ENCODE measurements at regions of chr4 and their contacts with region 1.

Region 1: GRCh38 chr4:101347557-101348366 is 436 bp upstream of the PPP3CA start:
- DNase-seq: peak; percentile 96 to 100 (median 98)
- ATAC-seq: peak; percentile 77 to 82
- H3K4me3 Mint-ChIP-seq: peak overlapping the region; percentile 94 to 99 (median 97)
- H3K27ac Mint-ChIP-seq: peak overlapping the region; percentile 87 to 97 (median 94)
- H3K4me1 Mint-ChIP-seq: peaks cover 12 to 38% (median 33%) of the 10 kb centered on the region in 4 donors
- H3K27me3 Mint-ChIP-seq: peaks cover 6 to 21% (median 8%) of the 10 kb centered on the region in 5 donors

Region 2: GRCh38 chr4:101025755-101026154 is 322.0 kb before region 1 on chr4:
- POLR2A ChIA-PET with region 1: no interaction called
- DNase-seq: no peak
- ATAC-seq: no peak
- H3K4me3 Mint-ChIP-seq: no peak overlapping the region
- H3K27ac Mint-ChIP-seq: peak overlapping the region in 2 of 10 donors; percentile 13 to 39
- H3K4me1 Mint-ChIP-seq: peaks cover 4 to 21% (median 9%) of the 10 kb centered on the region in 4 donors
- H3K27me3 Mint-ChIP-seq: no peaks in the 10 kb centered on the region

Region 3: GRCh38 chr4:101328063-101328602 is 19.6 kb before region 1 on chr4:
- POLR2A ChIA-PET with region 1: interaction called, 17 read pairs
- DNase-seq: peak in 5 of 10 donors; percentile 10 to 82 (median 74)
- ATAC-seq: peak; percentile 94
- H3K4me3 Mint-ChIP-seq: peak overlapping the region; percentile 59 to 87 (median 71)
- H3K27ac Mint-ChIP-seq: peak overlapping the region; percentile 4 to 88 (median 80)
- H3K4me1 Mint-ChIP-seq: peaks cover 6 to 76% (median 51%) of the 10 kb centered on the region in 4 donors
- H3K27me3 Mint-ChIP-seq: peaks cover 0 to 2% (median 0%) of the 10 kb centered on the region in 5 donors

Region 4: GRCh38 chr4:101393250-101393649 is 45.5 kb after region 1 on chr4:
- POLR2A ChIA-PET with region 1: no interaction called
- DNase-seq: no peak
- ATAC-seq: no peak
- H3K4me3 Mint-ChIP-seq: no peak overlapping the region
- H3K27ac Mint-ChIP-seq: no peak overlapping the region
- H3K4me1 Mint-ChIP-seq: no peaks in the 10 kb centered on the region
- H3K27me3 Mint-ChIP-seq: peaks cover 9 to 30% (median 11%) of the 10 kb centered on the region in 5 donors